ENCODE measurements at regions of chr11 and their contacts with region 1.

Region 1: GRCh38 chr11:72722050-72722748 is 30.0 kb downstream of the ARAP1 start:
- DNase-seq: peak; percentile 93
- H3K4me3 Mint-ChIP-seq: peak overlapping the region; percentile 90
- H3K27ac Mint-ChIP-seq: peak overlapping the region; percentile 95
- H3K4me1 Mint-ChIP-seq: peaks cover 49% of the 10 kb centered on the region
- H3K27me3 Mint-ChIP-seq: no peaks in the 10 kb centered on the region

Region 2: DNA sequence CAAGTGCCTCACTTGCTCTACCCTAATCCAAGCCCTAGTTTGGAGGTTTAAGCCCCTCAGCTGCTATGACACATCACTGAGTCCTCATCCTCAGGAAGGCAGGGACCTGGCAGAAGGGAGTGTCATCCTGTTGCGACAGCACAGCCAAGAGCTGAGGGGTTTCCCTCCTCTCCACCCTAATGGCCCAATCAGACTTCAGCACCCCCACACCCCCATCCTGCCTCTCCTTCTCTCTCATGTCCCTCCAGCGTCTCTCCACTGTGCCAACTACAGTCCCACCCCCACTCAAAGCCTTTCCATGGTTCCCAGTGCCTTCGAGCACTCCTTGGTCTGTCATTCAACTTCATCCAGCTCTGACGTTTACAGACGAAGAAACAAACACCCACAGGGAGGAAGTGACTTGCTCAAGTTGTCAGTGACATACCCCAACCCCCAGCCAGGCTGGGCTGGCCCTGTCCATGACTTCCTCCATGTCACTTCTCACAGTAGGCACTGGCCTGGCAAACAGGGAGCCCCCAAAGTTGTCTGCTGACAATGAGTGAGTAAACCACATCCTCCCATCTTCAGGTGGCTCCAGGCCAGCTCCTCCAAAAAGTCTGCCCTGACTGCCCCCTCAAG is 14.4 kb after region 1 on chr11:
- CTCF ChIA-PET with region 1: interaction called, 58 read pairs
- intact Hi-C with region 1: loop called (anchors 1 kb)
- DNase-seq: peak; percentile 89
- H3K4me3 Mint-ChIP-seq: peak overlapping the region; percentile 53
- H3K27ac Mint-ChIP-seq: peak overlapping the region; percentile 90
- H3K4me1 Mint-ChIP-seq: peaks cover 53% of the 10 kb centered on the region
- H3K27me3 Mint-ChIP-seq: no peaks in the 10 kb centered on the region

Region 3: DNA sequence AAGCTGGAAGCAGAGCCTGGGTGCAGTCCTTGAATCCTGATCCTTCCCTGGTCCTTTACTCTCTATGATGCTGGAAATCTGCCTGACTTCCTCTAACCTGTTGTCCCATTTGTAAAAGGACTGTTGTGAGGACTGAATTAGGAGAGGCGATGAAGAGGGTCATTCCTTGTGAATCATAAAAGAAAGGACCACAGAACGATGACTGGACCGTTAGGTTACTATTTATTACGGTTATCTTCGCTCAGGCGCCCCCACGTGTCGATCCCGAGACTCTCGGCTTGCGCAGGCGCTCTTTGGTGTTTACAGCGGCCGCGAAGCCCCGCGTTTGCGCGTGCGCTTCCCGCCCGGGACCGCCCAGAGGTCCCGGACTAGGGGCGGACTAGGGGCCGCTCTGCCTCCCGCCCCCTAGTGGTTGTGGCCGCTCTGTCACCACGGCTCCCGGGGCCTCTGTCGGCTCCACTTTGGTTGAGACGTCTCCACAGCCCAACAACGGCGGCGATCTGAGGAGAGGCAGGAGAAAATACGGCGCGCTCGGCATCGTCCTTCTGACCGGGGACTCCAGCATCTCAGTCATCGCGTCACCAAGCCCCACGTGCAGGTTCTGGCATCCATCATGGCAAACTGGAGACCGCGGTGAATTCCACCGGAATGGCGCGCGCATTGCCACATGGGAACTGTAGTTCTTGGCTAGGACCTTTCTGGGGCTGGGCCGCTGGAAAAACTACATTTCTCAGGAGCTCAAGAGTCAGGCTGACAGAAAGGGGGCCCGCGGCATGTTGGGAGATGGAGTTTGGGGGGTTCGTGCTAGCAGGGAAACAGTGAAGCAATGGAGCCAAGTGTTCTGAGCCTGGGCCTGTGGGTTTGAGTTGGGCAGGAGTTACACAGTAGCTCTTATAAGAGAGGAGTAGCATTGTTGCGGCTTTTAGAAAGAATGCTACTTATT is 71.5 kb after region 1 on chr11 and contains the start of gene STARD10:
- CTCF ChIA-PET with region 1: interaction called, 161 read pairs
- intact Hi-C with region 1: loop called (anchors 1 kb)
- DNase-seq: peak; percentile 97
- H3K4me3 Mint-ChIP-seq: peak within 1 kb of the TSS; percentile 100
- H3K27ac Mint-ChIP-seq: peak within 1 kb of the TSS; percentile 100
- H3K4me1 Mint-ChIP-seq: peaks cover 29% of the 10 kb centered on the region
- H3K27me3 Mint-ChIP-seq: no peaks in the 10 kb centered on the region
- total RNA-seq, gene STARD10: 11.9 to 12.0 TPM

Region 4: DNA sequence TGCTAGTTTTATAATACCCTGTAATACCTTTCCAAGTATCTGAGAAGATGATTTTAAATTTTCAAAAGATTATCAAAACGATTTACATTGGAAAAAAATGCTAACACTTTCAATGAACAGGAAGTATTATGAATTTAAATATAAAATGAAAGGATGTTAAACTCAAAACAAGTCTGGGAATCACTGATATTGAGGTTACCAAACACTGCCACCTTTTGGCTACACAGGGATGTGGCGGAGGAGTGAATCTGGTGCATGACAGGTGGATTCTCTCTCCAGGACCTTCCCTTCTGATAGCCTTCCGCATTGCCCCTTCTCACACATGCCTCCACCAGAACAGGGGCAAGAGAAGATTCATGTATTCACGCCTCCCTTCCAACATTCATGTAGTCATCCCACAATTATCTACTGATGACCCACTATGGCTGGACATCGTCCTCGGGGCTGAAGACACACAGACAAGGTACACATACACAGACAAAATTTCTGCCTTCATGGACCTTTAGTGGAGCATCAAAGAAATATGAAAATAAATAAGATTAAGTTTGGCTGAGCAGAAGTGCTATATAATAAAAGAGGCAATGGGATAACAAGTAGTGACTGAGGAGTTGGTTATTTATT is 126.8 kb after region 1 on chr11:
- CTCF ChIA-PET with region 1: interaction called, 12 read pairs
- intact Hi-C with region 1: no loop called
- DNase-seq: peak; percentile 66
- H3K4me3 Mint-ChIP-seq: no peak overlapping the region
- H3K27ac Mint-ChIP-seq: peak overlapping the region; percentile 15
- H3K4me1 Mint-ChIP-seq: peaks cover 6% of the 10 kb centered on the region
- H3K27me3 Mint-ChIP-seq: no peaks in the 10 kb centered on the region

Region 5: GRCh38 chr11:73177778-73178577 is 455.8 kb after region 1 on chr11:
- CTCF ChIA-PET with region 1: interaction called, 11 read pairs
- intact Hi-C with region 1: loop called (anchors 1 kb)
- DNase-seq: peak; percentile 90
- H3K4me3 Mint-ChIP-seq: no peak overlapping the region
- H3K27ac Mint-ChIP-seq: no peak overlapping the region
- H3K4me1 Mint-ChIP-seq: no peaks in the 10 kb centered on the region
- H3K27me3 Mint-ChIP-seq: no peaks in the 10 kb centered on the region